Activated T-helper 1 cell treated with anti-CD3 and anti-CD28 coated beads, Interleukin-12 subunit alpha, Interleukin-12 subunit beta, Interleukin-2, Interleukin-4 antibody, amounts not matched to agents 30 ng/mL and 10 ng/mL and 1 ng/mL, durations not matched to agents 14 hours and 24 hours and 36 hours (primary cell): ENCODE measurements at regions of chr10 and their contacts with region 1.

Region 1: DNA sequence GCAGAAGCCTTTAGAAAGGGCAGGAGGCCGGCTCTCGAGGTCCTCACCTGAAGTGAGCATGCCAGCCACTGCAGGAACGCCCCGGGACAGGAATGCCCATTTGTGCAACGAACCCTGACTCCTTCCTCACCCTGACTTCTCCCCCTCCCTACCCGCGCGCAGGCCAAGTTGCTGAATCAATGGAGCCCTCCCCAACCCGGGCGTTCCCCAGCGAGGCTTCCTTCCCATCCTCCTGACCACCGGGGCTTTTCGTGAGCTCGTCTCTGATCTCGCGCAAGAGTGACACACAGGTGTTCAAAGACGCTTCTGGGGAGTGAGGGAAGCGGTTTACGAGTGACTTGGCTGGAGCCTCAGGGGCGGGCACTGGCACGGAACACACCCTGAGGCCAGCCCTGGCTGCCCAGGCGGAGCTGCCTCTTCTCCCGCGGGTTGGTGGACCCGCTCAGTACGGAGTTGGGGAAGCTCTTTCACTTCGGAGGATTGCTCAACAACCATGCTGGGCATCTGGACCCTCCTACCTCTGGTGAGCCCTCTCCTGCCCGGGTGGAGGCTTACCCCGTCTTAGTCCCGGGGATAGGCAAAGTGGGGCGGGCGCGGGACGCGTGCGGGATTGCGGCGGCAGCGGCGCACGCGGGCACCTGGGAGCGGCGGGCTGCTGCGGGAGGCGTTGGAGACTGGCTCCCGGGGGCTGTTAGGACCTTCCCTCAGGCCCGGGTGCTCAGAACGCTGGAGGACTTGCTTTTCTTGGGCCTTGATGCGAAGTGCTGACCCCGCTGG is at the start of gene FAS:
- DNase-seq: peak; percentile 81
- H3K4me3 Mint-ChIP-seq: peak within 1 kb of the TSS; percentile 97
- H3K27ac Mint-ChIP-seq: peak within 1 kb of the TSS; percentile 97
- H3K4me1 Mint-ChIP-seq: peaks cover 75% of the 10 kb centered on the region
- H3K27me3 Mint-ChIP-seq: no peaks in the 10 kb centered on the region
- total RNA-seq, gene FAS: 36.4 and 38.6 TPM in 2 replicates

Region 2: DNA sequence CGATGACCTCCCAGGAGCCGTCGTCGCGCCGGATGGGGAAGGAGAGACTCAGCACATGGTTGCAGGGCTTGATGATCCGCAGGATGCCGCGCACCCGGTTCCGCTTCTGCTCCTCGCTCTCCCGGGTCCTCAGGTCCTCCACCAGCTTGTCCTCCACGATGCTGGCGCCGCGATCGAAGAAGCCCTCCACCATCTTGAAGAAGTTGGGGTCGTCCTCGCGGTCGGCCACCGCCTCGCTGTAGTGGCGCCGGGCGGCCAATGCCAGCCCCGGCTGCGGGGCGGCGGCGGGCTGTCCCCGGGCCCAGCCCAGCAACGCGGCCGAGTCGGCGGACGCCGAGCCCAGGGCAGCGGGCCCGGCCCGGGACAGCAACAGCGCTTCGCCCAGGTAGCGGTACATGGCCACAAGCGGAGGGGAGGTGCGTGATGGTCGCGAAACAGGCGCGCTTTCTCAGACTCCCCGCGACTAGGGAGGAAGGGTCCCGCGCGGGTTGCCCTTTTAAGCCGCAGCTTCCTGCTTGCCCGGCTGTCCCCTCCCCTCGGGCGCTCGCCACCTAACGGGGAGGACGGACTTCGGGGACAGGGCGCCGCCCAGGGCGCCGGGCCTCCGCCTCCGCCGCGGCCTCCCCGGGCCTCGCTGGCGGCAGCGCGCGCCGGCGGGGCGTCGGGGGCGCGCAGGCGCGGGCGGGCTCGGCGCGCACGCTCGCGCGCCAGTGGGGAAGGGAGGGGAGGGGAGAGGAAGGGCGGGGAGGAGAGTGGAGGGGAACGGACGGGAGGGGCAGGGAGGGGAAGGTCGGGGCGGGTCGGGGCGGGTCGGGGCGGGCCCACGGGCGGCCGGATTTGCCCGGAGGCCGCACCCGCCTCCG is 1896.0 kb before region 1 on chr10 and contains the starts of genes GLUD1 and SHLD2:
- intact Hi-C with region 1: loop called (anchors 2 kb)
- DNase-seq: peak; percentile 91
- H3K4me3 Mint-ChIP-seq: peak within 1 kb of the TSS; percentile 98
- H3K27ac Mint-ChIP-seq: peak within 1 kb of the TSS; percentile 95
- H3K4me1 Mint-ChIP-seq: peaks cover 45% of the 10 kb centered on the region
- H3K27me3 Mint-ChIP-seq: no peaks in the 10 kb centered on the region
- total RNA-seq, gene GLUD1: 116 and 125 TPM in 2 replicates
- total RNA-seq, gene SHLD2: 41.3 and 42.1 TPM in 2 replicates

Region 3: GRCh38 chr10:88582806-88583583 is 407.6 kb before region 1 on chr10 and contains the start of gene RNLS:
- intact Hi-C with region 1: loop called (anchors 5 kb)
- DNase-seq: peak; percentile 54
- H3K4me3 Mint-ChIP-seq: peak within 1 kb of the TSS; percentile 85
- H3K27ac Mint-ChIP-seq: peak within 1 kb of the TSS; percentile 73
- H3K4me1 Mint-ChIP-seq: peaks cover 14% of the 10 kb centered on the region
- H3K27me3 Mint-ChIP-seq: peaks cover 8% of the 10 kb centered on the region
- total RNA-seq, gene RNLS: 2.0 and 2.5 TPM in 2 replicates

Region 4: GRCh38 chr10:88932539-88933256 is 57.9 kb before region 1 on chr10:
- intact Hi-C with region 1: loop called (anchors 1 kb)
- DNase-seq: peak; percentile 30
- H3K4me3 Mint-ChIP-seq: no peak overlapping the region
- H3K27ac Mint-ChIP-seq: no peak overlapping the region
- H3K4me1 Mint-ChIP-seq: peaks cover 36% of the 10 kb centered on the region
- H3K27me3 Mint-ChIP-seq: no peaks in the 10 kb centered on the region

Region 5: DNA sequence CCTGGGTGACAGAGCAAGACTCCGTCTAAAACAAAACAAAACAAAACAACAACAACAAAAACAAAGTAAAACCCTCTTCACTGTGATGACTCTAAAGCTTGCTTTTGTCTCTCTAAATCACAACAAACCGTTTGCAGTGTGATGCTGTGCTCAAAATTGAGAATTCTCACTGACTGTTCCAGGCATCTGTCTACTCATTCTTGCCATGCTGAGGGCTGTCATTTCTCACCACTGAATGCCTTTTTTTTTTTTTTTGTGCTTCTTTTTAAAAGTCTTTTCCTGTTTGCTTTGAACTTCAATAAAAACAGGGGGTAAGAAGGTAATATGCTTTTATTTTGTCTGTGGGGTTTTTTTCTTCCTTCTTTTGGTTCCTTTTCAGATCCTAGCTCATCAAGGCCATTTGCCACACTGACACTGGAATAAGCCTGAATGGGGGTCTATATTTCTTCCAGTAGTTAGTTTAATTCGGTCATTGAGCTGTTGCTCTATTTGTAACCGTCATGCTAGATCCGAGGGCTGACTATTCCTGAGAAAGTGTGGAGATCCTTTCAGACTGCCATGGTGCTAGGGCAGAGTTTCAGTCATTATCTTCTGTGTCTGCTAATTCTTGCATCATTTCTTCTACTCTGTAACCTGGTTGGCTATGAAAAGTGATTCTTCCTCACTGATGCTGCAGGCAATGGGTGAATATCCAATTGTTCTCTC is 10.6 kb after region 1 on chr10:
- intact Hi-C with region 1: loop called (anchors 1 kb)
- DNase-seq: no peak
- H3K4me3 Mint-ChIP-seq: peak overlapping the region; percentile 37
- H3K27ac Mint-ChIP-seq: peak overlapping the region; percentile 81
- H3K4me1 Mint-ChIP-seq: peaks cover 76% of the 10 kb centered on the region
- H3K27me3 Mint-ChIP-seq: no peaks in the 10 kb centered on the region

Region 6: DNA sequence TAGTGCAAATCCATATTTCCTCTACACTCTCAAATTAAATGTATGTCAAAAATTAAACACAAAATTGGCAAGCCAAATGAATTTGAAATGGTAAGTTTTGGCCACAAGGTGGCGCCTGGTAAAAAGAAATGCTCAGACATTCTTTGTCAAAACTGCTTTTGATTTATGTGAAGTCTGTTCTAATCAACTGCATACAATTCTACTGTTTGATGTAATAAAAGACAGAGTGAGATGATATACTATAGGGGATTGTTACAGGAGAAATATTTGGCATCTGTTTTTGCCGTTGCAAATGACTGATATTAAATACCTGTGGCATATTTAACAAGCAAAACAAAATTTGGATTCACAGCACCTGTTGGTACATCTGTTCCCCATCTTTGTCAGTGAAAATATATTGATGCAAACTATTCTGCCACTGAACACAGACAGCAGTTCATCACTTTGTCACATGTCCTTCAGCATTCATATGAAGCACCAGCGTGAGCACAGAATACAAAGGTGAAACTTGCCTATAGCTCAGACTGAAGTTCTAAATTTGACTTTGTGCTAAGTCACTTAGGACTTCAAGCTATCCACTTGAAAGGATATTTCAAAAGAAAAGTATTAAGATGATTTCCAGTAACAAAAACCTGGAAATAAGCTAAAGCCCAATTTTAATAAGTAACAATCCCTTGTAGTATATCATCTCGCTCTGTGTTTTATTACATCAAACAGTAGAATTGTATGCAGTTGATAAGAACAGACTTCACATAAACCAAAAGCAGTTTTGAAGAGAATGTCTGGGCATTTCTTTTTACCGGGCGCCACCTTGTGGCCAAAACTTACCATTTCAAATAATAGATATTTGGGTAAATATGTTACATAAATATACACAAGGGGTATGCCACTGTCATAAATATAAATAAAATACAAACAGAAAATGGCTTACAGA is 226.8 kb after region 1 on chr10:
- intact Hi-C with region 1: loop called (anchors 1 kb)
- DNase-seq: peak; percentile 22
- H3K4me3 Mint-ChIP-seq: no peak overlapping the region
- H3K27ac Mint-ChIP-seq: no peak overlapping the region
- H3K4me1 Mint-ChIP-seq: peaks cover 17% of the 10 kb centered on the region
- H3K27me3 Mint-ChIP-seq: peaks cover 1% of the 10 kb centered on the region

Region 7: GRCh38 chr10:89684604-89685003 is 694.0 kb after region 1 on chr10:
- intact Hi-C with region 1: no loop called
- DNase-seq: no peak
- H3K4me3 Mint-ChIP-seq: no peak overlapping the region
- H3K27ac Mint-ChIP-seq: no peak overlapping the region
- H3K4me1 Mint-ChIP-seq: no peaks in the 10 kb centered on the region
- H3K27me3 Mint-ChIP-seq: peaks cover 38% of the 10 kb centered on the region

Region 8: GRCh38 chr10:89701238-89702120 is 710.9 kb after region 1 on chr10 and contains the start of gene KIF20B:
- intact Hi-C with region 1: loop called (anchors 5 kb)
- DNase-seq: peak; percentile 96
- H3K4me3 Mint-ChIP-seq: peak within 1 kb of the TSS; percentile 91
- H3K27ac Mint-ChIP-seq: peak within 1 kb of the TSS; percentile 95
- H3K4me1 Mint-ChIP-seq: peaks cover 63% of the 10 kb centered on the region
- H3K27me3 Mint-ChIP-seq: no peaks in the 10 kb centered on the region
- total RNA-seq, gene KIF20B: 48.7 TPM in 2 replicates